ENCODE measurements at regions of chr2 and their contacts with region 1.

Region 1: GRCh38 chr2:20661067-20661980 is 5.6 kb upstream of the GDF7 start:
- DNase-seq: peak; percentile 75
- ATAC-seq: peak; percentile 92
- H3K4me3 ChIP-seq: no peak overlapping the region
- H3K27ac ChIP-seq: no peak overlapping the region
- H3K4me1 ChIP-seq: peaks cover 5% of the 10 kb centered on the region; the same call in 1 of the 2 replicates
- H3K27me3 ChIP-seq: peaks cover 73% of the 10 kb centered on the region
- CTCF ChIP-seq: peak; percentile 96
- POLR2A ChIP-seq: peak; percentile 50; the same call in 1 of the 2 replicates
- RAD21 ChIP-seq: peak; percentile 99

Region 2: GRCh38 chr2:19901442-19902215 is 759.7 kb before region 1 on chr2 and contains the start of gene TTC32:
- CTCF ChIA-PET with region 1: no interaction called
- POLR2A ChIA-PET with region 1: no interaction called
- dilution Hi-C with region 1: no loop called
- in situ Hi-C with region 1: no loop called
- intact Hi-C with region 1: no loop called
- DNase-seq: peak; percentile 94
- ATAC-seq: peak; percentile 96
- H3K4me3 ChIP-seq: peak within 1 kb of the TSS; percentile 76
- H3K27ac ChIP-seq: peak within 1 kb of the TSS; percentile 95
- H3K4me1 ChIP-seq: peaks cover 11% of the 10 kb centered on the region
- H3K27me3 ChIP-seq: no peaks in the 10 kb centered on the region
- CTCF ChIP-seq: no peak
- POLR2A ChIP-seq: peak; percentile 81
- RAD21 ChIP-seq: no peak
- total RNA-seq, gene TTC32: 1.1 and 1.9 TPM in 2 replicates

Region 3: DNA sequence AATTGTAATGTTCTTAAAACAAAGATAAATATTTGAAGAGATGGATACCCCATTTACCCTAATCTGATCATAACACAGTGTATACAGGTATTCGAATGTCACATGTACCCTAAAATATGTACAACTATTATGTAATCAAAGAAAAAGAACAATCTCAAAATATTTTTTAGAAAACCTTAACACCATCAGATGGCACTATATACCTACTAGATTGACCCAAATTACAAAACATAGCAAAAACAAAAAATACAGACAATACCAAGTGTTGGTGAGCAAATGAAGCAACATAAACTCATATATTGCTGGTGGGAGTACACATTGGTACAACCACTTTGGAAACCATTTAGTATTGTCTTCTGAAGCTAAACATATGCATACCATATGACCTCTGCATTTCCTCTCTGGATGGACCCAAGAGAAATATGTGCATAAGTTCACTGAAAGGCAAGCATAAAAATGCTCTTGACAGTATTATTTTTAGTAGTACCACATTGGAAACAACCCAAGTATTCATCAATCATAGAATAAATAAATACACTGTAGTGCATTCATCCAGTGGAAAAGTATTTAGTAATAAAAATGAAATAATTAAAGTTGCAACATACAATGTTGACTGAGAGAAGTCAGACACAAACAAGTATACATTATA is 61.4 kb after region 1 on chr2:
- CTCF ChIA-PET with region 1: no interaction called
- POLR2A ChIA-PET with region 1: no interaction called
- dilution Hi-C with region 1: no loop called
- in situ Hi-C with region 1: no loop called
- intact Hi-C with region 1: no loop called
- DNase-seq: no peak
- ATAC-seq: no peak; the same call in 1 of the 2 replicates
- H3K4me3 ChIP-seq: no peak overlapping the region
- H3K27ac ChIP-seq: no peak overlapping the region
- H3K4me1 ChIP-seq: no peaks in the 10 kb centered on the region; the same call in 1 of the 2 replicates
- H3K27me3 ChIP-seq: no peaks in the 10 kb centered on the region
- CTCF ChIP-seq: no peak
- POLR2A ChIP-seq: no peak
- RAD21 ChIP-seq: no peak

Region 4: GRCh38 chr2:20755132-20755800 is 93.9 kb after region 1 on chr2:
- CTCF ChIA-PET with region 1: interaction called, 4 read pairs
- POLR2A ChIA-PET with region 1: no interaction called
- dilution Hi-C with region 1: no loop called
- in situ Hi-C with region 1: no loop called
- intact Hi-C with region 1: loop called (anchors 2 kb)
- DNase-seq: peak; percentile 7
- ATAC-seq: peak; percentile 46; the same call in 1 of the 2 replicates
- H3K4me3 ChIP-seq: no peak overlapping the region
- H3K27ac ChIP-seq: no peak overlapping the region
- H3K4me1 ChIP-seq: no peaks in the 10 kb centered on the region
- H3K27me3 ChIP-seq: no peaks in the 10 kb centered on the region
- CTCF ChIP-seq: peak; percentile 43
- POLR2A ChIP-seq: no peak
- RAD21 ChIP-seq: peak; percentile 45

Region 5: DNA sequence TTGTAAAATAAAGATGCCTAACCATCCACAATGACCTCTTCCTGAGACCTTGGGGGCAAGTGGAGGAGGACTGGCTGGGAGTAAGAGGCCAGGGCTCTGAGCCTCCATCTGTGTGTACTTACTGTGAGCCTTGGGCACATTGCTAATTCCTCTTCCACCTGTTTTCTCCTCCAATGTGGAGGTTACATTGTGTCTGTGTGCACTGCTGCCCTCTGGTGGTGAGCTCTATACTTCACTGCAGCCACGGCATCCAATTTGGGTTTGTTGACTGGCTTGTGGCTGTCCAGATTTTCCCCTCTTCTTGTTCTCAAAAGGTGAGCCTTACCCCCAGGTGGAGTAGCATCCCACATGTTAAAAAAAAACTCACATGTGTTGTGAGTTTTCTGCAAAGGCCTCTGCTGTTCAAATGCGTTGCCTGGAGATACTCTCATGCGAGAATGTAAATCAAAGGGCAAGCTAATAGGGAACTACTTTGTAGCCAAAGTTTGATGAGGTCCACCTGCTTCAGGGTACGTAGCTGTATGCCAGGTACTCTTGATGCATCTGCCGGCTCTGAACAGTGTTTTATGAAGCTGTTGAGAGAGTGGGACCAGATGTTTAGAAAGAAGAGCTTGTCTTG is 301.7 kb after region 1 on chr2:
- CTCF ChIA-PET with region 1: interaction called, 54 read pairs
- POLR2A ChIA-PET with region 1: no interaction called
- dilution Hi-C with region 1: no loop called
- in situ Hi-C with region 1: loop called (anchors 5 kb)
- intact Hi-C with region 1: loop called (anchors 1 kb)
- DNase-seq: peak; percentile 48
- ATAC-seq: peak; percentile 91
- H3K4me3 ChIP-seq: no peak overlapping the region
- H3K27ac ChIP-seq: no peak overlapping the region
- H3K4me1 ChIP-seq: no peaks in the 10 kb centered on the region
- H3K27me3 ChIP-seq: peaks cover 14% of the 10 kb centered on the region
- CTCF ChIP-seq: peak; percentile 85
- POLR2A ChIP-seq: no peak
- RAD21 ChIP-seq: peak; percentile 79

Region 6: GRCh38 chr2:21042958-21043743 is 381.8 kb after region 1 on chr2:
- CTCF ChIA-PET with region 1: interaction called, 4 read pairs
- POLR2A ChIA-PET with region 1: no interaction called
- dilution Hi-C with region 1: no loop called
- in situ Hi-C with region 1: no loop called
- intact Hi-C with region 1: loop called (anchors 1 kb)
- DNase-seq: peak; percentile 31
- ATAC-seq: peak; percentile 91
- H3K4me3 ChIP-seq: no peak overlapping the region
- H3K27ac ChIP-seq: no peak overlapping the region
- H3K4me1 ChIP-seq: no peaks in the 10 kb centered on the region
- H3K27me3 ChIP-seq: peaks cover 2% of the 10 kb centered on the region; the same call in 1 of the 2 replicates
- CTCF ChIP-seq: peak; percentile 93
- POLR2A ChIP-seq: no peak
- RAD21 ChIP-seq: peak; percentile 88

Measured in IMR-90 (cell line).